ENCODE measurements at regions of chr4 and their contacts with region 1.

Region 1: DNA sequence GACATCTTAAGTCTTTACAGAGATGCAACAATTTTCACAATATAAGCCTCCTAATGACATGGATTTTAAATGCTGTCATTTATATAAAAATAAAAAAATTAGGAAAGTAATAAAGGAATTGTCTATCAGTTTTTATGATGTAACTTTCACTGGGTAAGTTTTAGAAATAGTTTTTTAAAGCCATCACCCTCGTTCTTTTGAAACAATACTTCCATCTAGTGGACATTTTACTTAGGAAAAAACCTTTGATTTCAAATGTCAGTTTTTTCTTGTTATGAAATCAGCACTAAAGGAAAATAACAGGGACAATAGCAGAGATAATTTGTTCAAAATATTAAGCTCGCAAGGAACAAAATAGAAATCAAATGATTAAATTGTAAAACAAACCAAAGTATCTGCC is 24.3 kb upstream of the NDNF start:
- DNase-seq: no peak
- H3K4me3 ChIP-seq: no peak overlapping the region
- H3K27ac ChIP-seq: no peak overlapping the region
- H3K4me1 ChIP-seq: no peaks in the 10 kb centered on the region
- H3K27me3 ChIP-seq: no peaks in the 10 kb centered on the region
- CTCF ChIP-seq: peak in 4 of 6 experiments; percentile 21 to 68 (median 62)
- POLR2A ChIP-seq: no peak

Region 2: GRCh38 chr4:120156120-120156718 is 940.4 kb before region 1 on chr4:
- intact Hi-C with region 1: loop called (anchors 5 kb)
- DNase-seq: no peak
- H3K4me3 ChIP-seq: no peak overlapping the region
- H3K27ac ChIP-seq: no peak overlapping the region
- H3K4me1 ChIP-seq: no peaks in the 10 kb centered on the region
- H3K27me3 ChIP-seq: no peaks in the 10 kb centered on the region
- CTCF ChIP-seq: peak in 5 of 6 experiments; percentile 33 to 76 (median 65)
- POLR2A ChIP-seq: no peak

Region 3: DNA sequence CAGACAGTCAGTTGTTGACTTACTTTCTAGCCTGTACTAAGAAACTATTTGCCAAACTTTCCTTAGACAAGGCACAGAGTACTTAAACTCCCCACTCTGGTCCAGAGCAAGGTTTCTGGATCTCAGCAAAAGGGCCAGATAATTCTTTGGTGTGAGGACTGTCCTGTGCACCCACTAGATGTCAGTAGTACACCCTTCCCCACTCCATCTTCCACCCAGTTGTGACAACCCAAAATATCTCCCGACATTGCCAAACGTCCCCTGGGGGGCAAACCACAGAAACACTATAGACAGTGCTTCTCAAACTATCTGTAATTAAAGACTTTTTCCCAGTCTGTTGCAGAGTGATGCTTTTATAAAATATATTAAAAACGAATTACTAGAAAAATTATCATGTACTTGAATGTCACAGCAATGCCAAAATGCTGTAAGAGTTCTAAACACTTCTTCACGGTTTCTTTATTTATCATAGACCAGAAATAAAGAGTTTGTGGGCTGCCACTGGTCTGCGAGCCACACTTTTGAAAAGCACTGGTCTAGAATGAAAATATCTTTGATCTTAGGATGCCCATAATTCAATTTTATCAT is 377.6 kb before region 1 on chr4:
- intact Hi-C with region 1: loop called (anchors 5 kb)
- DNase-seq: peak; percentile 9 to 28
- H3K4me3 ChIP-seq: no peak overlapping the region
- H3K27ac ChIP-seq: no peak overlapping the region
- H3K4me1 ChIP-seq: no peaks in the 10 kb centered on the region
- H3K27me3 ChIP-seq: no peaks in the 10 kb centered on the region
- CTCF ChIP-seq: peak in 5 of 6 experiments; percentile 14 to 80 (median 69)
- POLR2A ChIP-seq: no peak

Measured in thyroid gland (tissue), 4 donors.